K562 (cell line): ENCODE measurements at regions of chr16 and their contacts with region 1.

Region 1: DNA sequence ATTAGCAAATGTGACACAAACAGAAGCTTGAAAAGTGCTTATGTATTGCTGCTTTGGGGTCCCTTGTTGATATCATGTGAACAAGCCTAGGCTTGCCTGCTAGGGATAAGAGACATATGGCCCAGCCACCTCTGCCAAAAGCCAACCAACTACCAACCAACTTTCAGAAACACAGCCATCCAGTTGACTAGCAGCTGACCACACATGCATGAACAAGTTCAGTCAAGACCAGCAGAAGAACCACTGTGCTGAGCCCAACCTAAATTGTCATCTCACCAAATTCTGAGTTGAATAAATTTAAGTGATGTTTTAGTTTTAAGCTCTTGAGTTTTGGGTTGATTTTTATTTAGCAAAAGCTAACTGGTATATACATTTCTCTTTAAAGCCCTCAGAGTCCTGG is 3.5 kb downstream of the ERN2 start:
- DNase-seq: no peak
- ATAC-seq: no peak
- H3K4me3 ChIP-seq: no peak overlapping the region
- H3K27ac ChIP-seq: no peak overlapping the region
- H3K4me1 ChIP-seq: peaks cover 0 to 16% of the 10 kb centered on the region in 2 experiments; a peak in 2 of 5 replicates
- H3K27me3 ChIP-seq: peaks cover 0 to 5% of the 10 kb centered on the region in 2 experiments; a peak in 2 of 5 replicates
- CTCF ChIP-seq: no peak
- EP300 ChIP-seq: no peak
- POLR2A ChIP-seq: no peak
- RAD21 ChIP-seq: no peak

Region 2: GRCh38 chr16:23491490-23492391 is 217.8 kb before region 1 on chr16:
- CTCF ChIA-PET with region 1: no interaction called
- POLR2A ChIA-PET with region 1: no interaction called
- in situ Hi-C with region 1: no loop called
- intact Hi-C with region 1: no loop called
- DNase-seq: no peak
- ATAC-seq: no peak
- H3K4me3 ChIP-seq: no peak overlapping the region
- H3K27ac ChIP-seq: no peak overlapping the region
- H3K4me1 ChIP-seq: no peaks in the 10 kb centered on the region
- H3K27me3 ChIP-seq: no peaks in the 10 kb centered on the region
- CTCF ChIP-seq: no peak
- EP300 ChIP-seq: no peak
- POLR2A ChIP-seq: no peak
- RAD21 ChIP-seq: no peak

Region 3: DNA sequence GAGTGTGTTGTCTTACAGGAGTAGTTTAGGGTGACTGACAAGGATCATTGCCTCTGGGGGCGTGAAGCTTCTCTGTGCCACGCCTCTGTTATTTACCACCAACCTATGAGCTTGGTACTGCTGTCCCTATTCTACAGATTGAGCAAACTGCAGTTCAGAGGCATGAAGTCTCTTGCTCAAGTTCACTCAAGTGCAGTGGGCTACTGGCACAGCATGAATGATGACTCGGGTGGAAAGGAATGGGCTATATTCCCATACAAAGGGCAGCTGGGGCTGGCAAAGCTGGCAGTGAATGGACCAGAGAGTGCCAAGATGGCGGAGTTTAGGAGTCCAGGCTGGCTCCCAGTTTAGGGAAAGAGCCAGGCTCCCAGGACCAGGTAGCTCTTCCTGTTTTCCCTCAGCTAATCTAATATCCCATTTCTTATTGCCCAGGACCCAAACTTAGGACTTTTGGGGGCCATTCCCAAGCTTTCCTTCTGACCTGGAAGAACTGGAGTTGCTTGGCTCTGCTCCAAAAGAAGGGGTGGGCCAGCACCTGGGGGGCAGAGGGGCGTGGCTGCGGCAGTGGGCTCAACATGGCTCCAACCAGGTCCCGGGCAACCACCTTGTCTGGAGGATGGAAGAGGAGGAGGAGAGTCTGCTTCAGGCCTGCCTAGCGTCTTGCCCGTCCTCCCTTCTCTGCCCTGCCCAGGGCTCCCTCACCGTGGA is 17.9 kb before region 1 on chr16:
- CTCF ChIA-PET with region 1: no interaction called
- POLR2A ChIA-PET with region 1: interaction called, 13 read pairs
- in situ Hi-C with region 1: no loop called
- intact Hi-C with region 1: no loop called
- DNase-seq: no peak
- ATAC-seq: no peak
- H3K4me3 ChIP-seq: no peak overlapping the region
- H3K27ac ChIP-seq: no peak overlapping the region
- H3K4me1 ChIP-seq: peaks cover 0 to 27% of the 10 kb centered on the region in 2 experiments; a peak in 3 of 5 replicates
- H3K27me3 ChIP-seq: no peaks in the 10 kb centered on the region
- CTCF ChIP-seq: no peak
- EP300 ChIP-seq: no peak
- POLR2A ChIP-seq: no peak
- RAD21 ChIP-seq: no peak

Region 4: GRCh38 chr16:23699100-23699499 is 10.4 kb before region 1 on chr16:
- CTCF ChIA-PET with region 1: no interaction called
- POLR2A ChIA-PET with region 1: interaction called, 13 read pairs
- in situ Hi-C with region 1: no loop called
- intact Hi-C with region 1: no loop called
- DNase-seq: no peak
- ATAC-seq: 0 out of 3 replicates have a peak, but pooled peaks have one; percentile 8
- H3K4me3 ChIP-seq: no peak overlapping the region
- H3K27ac ChIP-seq: no peak overlapping the region
- H3K4me1 ChIP-seq: peaks cover 13 to 19% of the 10 kb centered on the region in 2 experiments; a peak in 4 of 5 replicates
- H3K27me3 ChIP-seq: no peaks in the 10 kb centered on the region
- CTCF ChIP-seq: no peak
- EP300 ChIP-seq: no peak
- POLR2A ChIP-seq: no peak
- RAD21 ChIP-seq: no peak

Region 5: DNA sequence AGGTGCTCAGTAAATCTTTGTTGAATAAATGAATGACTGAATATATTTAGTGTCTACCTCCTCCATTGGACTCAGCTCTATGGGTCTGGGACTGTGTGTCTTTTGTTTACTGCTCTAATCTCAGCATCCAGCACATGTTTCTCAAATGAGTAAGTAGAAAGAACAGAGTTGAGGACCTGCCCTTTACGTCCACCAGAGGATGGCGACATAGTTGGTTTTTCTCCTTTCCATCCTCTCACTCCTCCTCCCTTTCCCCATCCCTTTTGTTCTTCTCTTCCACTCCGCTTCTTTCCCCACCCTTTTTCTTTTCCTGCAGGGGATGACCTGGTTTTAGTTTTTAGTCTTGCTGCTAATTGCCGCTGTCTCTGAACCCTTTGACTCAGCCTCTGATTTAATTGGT is 33.2 kb after region 1 on chr16:
- CTCF ChIA-PET with region 1: no interaction called
- POLR2A ChIA-PET with region 1: no interaction called
- in situ Hi-C with region 1: no loop called
- intact Hi-C with region 1: no loop called
- DNase-seq: peak in 2 of 4 experiments; percentile 24 to 36
- ATAC-seq: peak; percentile 61; the same call in 2 of the 3 replicates
- H3K4me3 ChIP-seq: no peak overlapping the region
- H3K27ac ChIP-seq: no peak overlapping the region
- H3K4me1 ChIP-seq: no peaks in the 10 kb centered on the region
- H3K27me3 ChIP-seq: peaks cover 6 to 9% of the 10 kb centered on the region in 2 experiments; a peak in 2 of 5 replicates
- CTCF ChIP-seq: peak; percentile 17 to 40 (median 30); a peak in 3 of 6 replicates
- EP300 ChIP-seq: no peak
- POLR2A ChIP-seq: no peak
- RAD21 ChIP-seq: peak in 1 of 2 experiments; percentile 47; a peak in 2 of 4 replicates

Region 6: GRCh38 chr16:23768586-23768985 is 59.0 kb after region 1 on chr16:
- CTCF ChIA-PET with region 1: no interaction called
- POLR2A ChIA-PET with region 1: no interaction called
- in situ Hi-C with region 1: no loop called
- intact Hi-C with region 1: no loop called
- DNase-seq: no peak
- ATAC-seq: no peak
- H3K4me3 ChIP-seq: no peak overlapping the region
- H3K27ac ChIP-seq: no peak overlapping the region
- H3K4me1 ChIP-seq: peaks cover 0 to 8% of the 10 kb centered on the region in 2 experiments; a peak in 2 of 5 replicates
- H3K27me3 ChIP-seq: no peaks in the 10 kb centered on the region
- CTCF ChIP-seq: no peak
- EP300 ChIP-seq: no peak
- POLR2A ChIP-seq: no peak
- RAD21 ChIP-seq: no peak